Naive thymus-derived CD4-positive, alpha-beta T cell (primary cell): ENCODE measurements at regions of chr9 and their contacts with region 1.

Region 1: GRCh38 chr9:37903647-37904444 is at the start of gene SLC25A51:
- DNase-seq: peak; percentile 89 to 99 (median 95)
- ATAC-seq: peak; percentile 93
- H3K4me3 ChIP-seq: peak within 1 kb of the TSS; percentile 69
- H3K4me3 Mint-ChIP-seq: peak within 1 kb of the TSS; percentile 88 to 96 (median 90)
- H3K27ac ChIP-seq: peak within 1 kb of the TSS; percentile 71
- H3K27ac Mint-ChIP-seq: peak within 1 kb of the TSS; percentile 90 to 97 (median 94)
- H3K4me1 ChIP-seq: peaks cover 20 to 22% of the 10 kb centered on the region in 2 donors
- H3K4me1 Mint-ChIP-seq: peaks cover 16 to 41% (median 30%) of the 10 kb centered on the region in 7 donors
- H3K27me3 ChIP-seq: no peaks in the 10 kb centered on the region
- H3K27me3 Mint-ChIP-seq: peaks cover 0 to 4% (median 0%) of the 10 kb centered on the region in 5 donors
- total RNA-seq, gene SLC25A51: 20.2 to 37.8 (median 30.2) TPM

Region 2: DNA sequence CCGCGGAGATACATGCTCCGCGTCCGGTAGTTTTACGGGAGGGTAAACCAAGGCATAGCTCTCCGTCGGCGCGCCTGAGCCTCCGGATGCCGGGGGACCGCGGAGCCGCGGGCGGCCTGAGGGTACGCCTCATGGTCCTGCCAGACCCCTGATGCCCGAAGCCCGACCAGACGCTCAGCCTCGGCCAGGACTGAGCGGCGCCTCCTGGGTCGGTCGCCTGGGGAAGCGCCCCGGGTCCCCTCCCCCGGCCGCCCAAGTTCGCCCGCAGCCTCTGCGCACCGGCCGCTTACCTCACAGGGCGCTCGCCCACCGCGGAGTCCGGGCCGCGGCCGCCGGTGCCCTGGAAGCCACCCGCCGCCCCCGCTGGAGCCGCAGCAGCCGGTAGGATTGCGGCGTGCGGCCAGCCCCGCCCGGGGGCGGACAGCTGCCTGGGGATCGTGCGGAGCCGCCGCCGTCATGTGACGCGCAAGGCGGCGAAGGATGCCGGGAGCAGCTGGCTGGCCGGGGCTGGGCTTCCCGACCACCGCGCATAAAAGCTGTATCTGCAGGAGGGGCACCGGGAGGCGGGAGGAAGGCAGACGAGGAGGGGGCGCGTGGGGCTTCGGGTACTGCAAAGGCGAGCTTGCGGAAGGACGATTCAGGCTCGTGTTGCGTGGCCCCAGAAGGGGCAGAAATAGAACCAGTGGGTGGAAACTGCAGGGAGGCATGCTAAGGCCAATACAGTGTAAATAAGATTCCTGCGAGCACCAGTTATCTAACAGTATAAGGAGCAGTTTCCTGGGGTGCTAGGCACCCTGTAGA is 327.7 kb before region 1 on chr9 and contains the start of gene FBXO10:
- CTCF ChIA-PET with region 1: no interaction called
- POLR2A ChIA-PET with region 1: no interaction called
- intact Hi-C with region 1: loop called in 1 of 2 experiments (anchors 5 kb)
- DNase-seq: peak; percentile 10 to 73 (median 31)
- ATAC-seq: peak; percentile 80
- H3K4me3 ChIP-seq: peak within 1 kb of the TSS; percentile 66
- H3K4me3 Mint-ChIP-seq: peak within 1 kb of the TSS; percentile 83 to 93 (median 88)
- H3K27ac ChIP-seq: peak within 1 kb of the TSS; percentile 11
- H3K27ac Mint-ChIP-seq: peak within 1 kb of the TSS in 7 of 9 donors; percentile 17 to 68 (median 64)
- H3K4me1 ChIP-seq: peaks cover 0 to 8% of the 10 kb centered on the region in 2 donors
- H3K4me1 Mint-ChIP-seq: peaks cover 6 to 29% (median 23%) of the 10 kb centered on the region in 7 donors
- H3K27me3 ChIP-seq: no peaks in the 10 kb centered on the region
- H3K27me3 Mint-ChIP-seq: peaks cover 0 to 10% (median 0%) of the 10 kb centered on the region in 5 donors
- total RNA-seq, gene FBXO10: 0.85 to 2.6 (median 2.2) TPM

Region 3: DNA sequence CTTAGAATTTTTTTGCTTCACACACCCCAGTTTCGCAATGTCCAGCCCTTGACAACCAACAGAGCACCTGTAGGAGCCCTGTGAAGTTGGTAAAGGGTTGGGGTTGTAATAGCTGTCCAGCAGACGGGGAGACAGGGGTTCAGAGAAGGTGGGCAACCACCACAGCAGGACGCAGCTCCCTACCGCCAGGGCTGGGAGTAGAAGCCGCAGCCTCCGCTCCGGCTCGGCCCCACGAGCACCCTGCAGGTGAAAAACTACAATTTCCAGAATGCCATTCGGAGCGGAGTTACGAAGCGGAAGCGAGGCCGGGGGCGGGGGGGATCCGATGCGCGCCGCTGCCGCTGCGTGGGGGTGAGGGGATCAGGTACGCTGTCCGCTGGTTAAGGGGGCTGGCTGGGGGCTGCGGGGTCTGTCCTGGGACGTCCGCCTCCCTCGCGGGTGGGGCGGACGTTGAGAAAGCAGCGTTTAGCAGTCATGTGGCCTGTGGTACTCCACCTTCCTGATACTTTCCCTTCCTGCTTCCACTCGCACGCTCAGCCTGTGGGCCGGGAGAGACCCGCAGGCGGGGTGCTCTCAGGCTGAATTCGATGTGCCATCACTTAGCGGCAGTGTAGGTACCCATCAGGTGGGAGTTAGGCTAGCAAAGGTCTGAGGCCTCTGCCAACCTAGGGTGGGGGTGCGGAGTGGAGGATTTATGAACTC is 150.2 kb before region 1 on chr9 and contains the start of gene TRMT10B:
- CTCF ChIA-PET with region 1: interaction called, 4 read pairs
- POLR2A ChIA-PET with region 1: no interaction called
- intact Hi-C with region 1: loop called in 1 of 2 experiments (anchors 1 kb)
- DNase-seq: peak; percentile 50 to 78 (median 70)
- ATAC-seq: peak; percentile 95
- H3K4me3 ChIP-seq: peak within 1 kb of the TSS; percentile 92
- H3K4me3 Mint-ChIP-seq: peak within 1 kb of the TSS; percentile 87 to 98 (median 96)
- H3K27ac ChIP-seq: peak within 1 kb of the TSS; percentile 87
- H3K27ac Mint-ChIP-seq: peak within 1 kb of the TSS; percentile 68 to 95 (median 92)
- H3K4me1 ChIP-seq: peaks cover 9 to 11% of the 10 kb centered on the region in 2 donors
- H3K4me1 Mint-ChIP-seq: peaks cover 26 to 52% (median 33%) of the 10 kb centered on the region in 7 donors
- H3K27me3 ChIP-seq: no peaks in the 10 kb centered on the region
- H3K27me3 Mint-ChIP-seq: no peaks in the 10 kb centered on the region
- total RNA-seq, gene TRMT10B: 16.0 to 28.9 (median 18.5) TPM

Region 4: DNA sequence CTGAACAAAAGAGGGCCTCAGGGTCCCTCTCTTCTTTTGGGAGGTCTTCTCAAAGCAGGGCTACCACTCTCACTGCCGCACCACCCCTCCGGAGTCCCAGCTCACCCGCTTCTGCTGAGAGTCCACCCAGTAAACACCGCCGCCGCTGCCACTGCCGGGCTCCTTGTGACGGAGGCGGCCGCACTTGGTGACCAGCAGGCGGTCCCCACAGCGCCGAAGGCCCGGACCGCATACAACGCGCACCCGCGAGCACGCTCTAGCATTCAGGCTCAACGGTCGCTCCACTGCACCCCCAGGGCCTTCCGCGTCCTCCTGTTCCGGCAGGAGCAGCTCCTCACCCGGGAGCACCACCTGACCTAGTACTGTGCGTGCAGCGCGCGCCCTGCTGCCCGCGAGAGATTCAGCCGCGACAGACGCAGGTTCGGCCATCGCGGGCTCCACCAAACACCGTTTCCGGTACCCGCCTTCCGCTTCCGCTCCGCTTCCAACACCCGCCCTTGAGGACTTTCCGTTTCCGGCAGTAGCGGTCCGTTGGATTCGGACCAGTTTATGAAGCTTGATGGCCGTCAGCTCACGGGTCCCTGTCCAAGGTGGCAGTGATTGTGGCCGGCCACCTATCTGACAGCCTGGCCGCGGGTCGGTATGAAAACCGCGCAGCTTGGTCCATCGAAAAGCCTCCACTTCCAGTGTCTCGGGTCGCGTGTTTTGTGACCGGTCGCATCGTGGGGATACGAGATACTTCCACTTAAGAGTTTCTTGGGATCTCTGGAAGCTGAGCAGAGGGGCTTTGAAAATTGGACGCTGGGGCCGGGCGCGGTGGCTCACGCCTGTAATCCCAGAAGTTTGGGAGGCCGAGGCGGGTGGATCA is 119.0 kb before region 1 on chr9 and contains the start of gene EXOSC3:
- CTCF ChIA-PET with region 1: no interaction called
- POLR2A ChIA-PET with region 1: interaction called, 3 read pairs
- intact Hi-C with region 1: loop called (anchors 1 kb)
- DNase-seq: peak; percentile 66 to 85 (median 81)
- ATAC-seq: peak; percentile 92
- H3K4me3 ChIP-seq: peak within 1 kb of the TSS; percentile 92
- H3K4me3 Mint-ChIP-seq: peak within 1 kb of the TSS; percentile 96 to 98 (median 97)
- H3K27ac ChIP-seq: peak within 1 kb of the TSS; percentile 85
- H3K27ac Mint-ChIP-seq: peak within 1 kb of the TSS; percentile 95 to 98 (median 96)
- H3K4me1 ChIP-seq: peaks cover 18 to 21% of the 10 kb centered on the region in 2 donors
- H3K4me1 Mint-ChIP-seq: peaks cover 18 to 50% (median 40%) of the 10 kb centered on the region in 7 donors
- H3K27me3 ChIP-seq: no peaks in the 10 kb centered on the region
- H3K27me3 Mint-ChIP-seq: peaks cover 0 to 4% (median 0%) of the 10 kb centered on the region in 5 donors
- total RNA-seq, gene EXOSC3: 27.8 to 66.1 (median 60.7) TPM

Region 5: DNA sequence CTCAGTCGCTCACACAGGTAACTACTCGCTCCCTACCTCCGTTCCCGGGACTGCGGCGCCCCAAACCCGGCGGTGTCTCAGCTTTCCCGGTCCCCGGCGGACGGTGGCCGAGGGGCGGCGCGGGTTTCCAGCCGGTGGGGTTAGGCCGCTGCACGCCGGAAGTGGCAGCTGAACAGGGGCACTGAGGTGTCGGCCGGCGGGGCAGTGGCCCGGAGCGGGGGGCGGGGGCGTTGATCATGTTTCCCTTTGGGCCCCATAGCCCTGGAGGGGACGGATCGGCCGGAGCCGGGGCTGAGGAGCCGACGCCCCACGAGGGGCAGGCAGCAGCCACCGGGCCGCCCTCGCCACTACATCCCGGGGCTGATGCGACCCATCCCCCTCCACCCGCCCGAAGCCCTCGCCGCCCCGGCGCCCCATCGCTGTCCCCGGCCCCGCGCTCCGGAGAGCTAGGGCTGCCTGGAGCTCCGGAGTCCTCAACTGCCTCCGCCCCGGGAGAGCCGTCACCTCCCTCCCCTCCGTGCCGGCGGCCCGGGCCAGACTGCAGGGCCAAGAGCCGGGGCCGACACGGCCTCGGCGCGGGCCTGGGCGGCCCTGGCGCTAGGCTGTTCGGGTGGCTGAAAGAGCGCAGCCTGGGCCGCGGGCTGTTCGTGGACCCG is 103.1 kb before region 1 on chr9 and contains the start of gene DCAF10:
- CTCF ChIA-PET with region 1: no interaction called
- POLR2A ChIA-PET with region 1: no interaction called
- intact Hi-C with region 1: loop called in 1 of 2 experiments (anchors 2 kb)
- DNase-seq: peak; percentile 80 to 97 (median 87)
- ATAC-seq: peak; percentile 95
- H3K4me3 ChIP-seq: peak within 1 kb of the TSS; percentile 97
- H3K4me3 Mint-ChIP-seq: peak within 1 kb of the TSS; percentile 86 to 95 (median 93)
- H3K27ac ChIP-seq: peak within 1 kb of the TSS; percentile 69
- H3K27ac Mint-ChIP-seq: peak within 1 kb of the TSS; percentile 71 to 95 (median 90)
- H3K4me1 ChIP-seq: peaks cover 19 to 26% of the 10 kb centered on the region in 2 donors
- H3K4me1 Mint-ChIP-seq: peaks cover 24 to 55% (median 42%) of the 10 kb centered on the region in 7 donors
- H3K27me3 ChIP-seq: no peaks in the 10 kb centered on the region
- H3K27me3 Mint-ChIP-seq: no peaks in the 10 kb centered on the region
- total RNA-seq, gene DCAF10: 12.1 to 22.5 (median 21.3) TPM

Region 6: GRCh38 chr9:38068866-38069629 is 165.2 kb after region 1 on chr9 and contains the start of gene SHB:
- CTCF ChIA-PET with region 1: no interaction called
- POLR2A ChIA-PET with region 1: interaction called, 6 read pairs
- intact Hi-C with region 1: loop called in 1 of 2 experiments (anchors 2 kb)
- DNase-seq: peak; percentile 54 to 80 (median 75)
- ATAC-seq: peak; percentile 89
- H3K4me3 ChIP-seq: peak within 1 kb of the TSS; percentile 83
- H3K4me3 Mint-ChIP-seq: peak within 1 kb of the TSS; percentile 76 to 96 (median 88)
- H3K27ac ChIP-seq: peak within 1 kb of the TSS; percentile 76
- H3K27ac Mint-ChIP-seq: peak within 1 kb of the TSS in 8 of 9 donors; percentile 44 to 81 (median 73)
- H3K4me1 ChIP-seq: peaks cover 6 to 18% of the 10 kb centered on the region in 2 donors
- H3K4me1 Mint-ChIP-seq: peaks cover 5 to 39% (median 33%) of the 10 kb centered on the region in 7 donors
- H3K27me3 ChIP-seq: no peaks in the 10 kb centered on the region
- H3K27me3 Mint-ChIP-seq: peaks cover 0 to 58% (median 0%) of the 10 kb centered on the region in 5 donors
- total RNA-seq, gene SHB: 0.29 to 2.0 (median 0.81) TPM

Region 7: GRCh38 chr9:38392235-38393127 is 488.6 kb after region 1 on chr9 and contains the start of gene ALDH1B1:
- CTCF ChIA-PET with region 1: no interaction called
- POLR2A ChIA-PET with region 1: no interaction called
- intact Hi-C with region 1: loop called in 1 of 2 experiments (anchors 2 kb)
- DNase-seq: peak; percentile 18 to 83 (median 35)
- ATAC-seq: peak; percentile 97
- H3K4me3 ChIP-seq: peak within 1 kb of the TSS; percentile 80
- H3K4me3 Mint-ChIP-seq: peak within 1 kb of the TSS; percentile 85 to 98 (median 93)
- H3K27ac ChIP-seq: peak within 1 kb of the TSS; percentile 59
- H3K27ac Mint-ChIP-seq: peak within 1 kb of the TSS; percentile 57 to 91 (median 87)
- H3K4me1 ChIP-seq: peaks cover 7% of the 10 kb centered on the region in 2 donors
- H3K4me1 Mint-ChIP-seq: peaks cover 12 to 26% (median 17%) of the 10 kb centered on the region in 7 donors
- H3K27me3 ChIP-seq: no peaks in the 10 kb centered on the region
- H3K27me3 Mint-ChIP-seq: peaks cover 0 to 23% (median 0%) of the 10 kb centered on the region in 5 donors
- total RNA-seq, gene ALDH1B1: 1.9 to 13.4 (median 3.8) TPM